ENCODE measurements at regions of chr20 and their contacts with region 1.

Region 1: DNA sequence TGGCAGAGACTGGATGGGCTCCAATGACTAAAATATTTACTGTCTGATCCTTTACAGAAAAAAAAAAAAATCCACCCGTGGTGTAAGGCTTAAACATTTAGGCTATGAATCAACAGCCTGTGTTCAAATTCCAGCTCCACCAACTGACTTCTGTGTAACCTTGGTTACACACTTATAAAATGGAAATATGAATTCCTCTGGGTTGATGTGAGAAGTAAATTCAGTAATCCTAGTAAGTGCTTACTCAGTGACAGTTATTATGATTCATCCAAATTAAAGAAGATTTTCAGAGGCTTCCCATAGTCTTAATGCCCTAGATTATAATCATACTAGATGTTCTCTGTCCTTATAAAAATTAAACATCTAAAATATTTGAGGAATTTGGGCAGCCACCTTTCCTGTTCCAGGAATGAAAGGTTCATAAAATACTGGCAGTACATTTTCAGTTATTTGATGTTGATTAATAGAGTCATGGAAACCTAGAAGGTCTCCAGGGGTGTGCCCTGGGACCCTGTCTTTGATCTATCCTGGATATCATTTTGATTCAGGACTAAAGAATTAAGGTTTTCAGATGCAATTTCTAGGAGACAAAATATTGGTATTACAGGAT is 180.3 kb upstream of the ZNF217 start:
- DNase-seq: peak; percentile 37 to 99
- H3K4me3 ChIP-seq: no peak overlapping the region
- H3K27ac ChIP-seq: peak overlapping the region; percentile 93
- H3K4me1 ChIP-seq: peaks cover 41% of the 10 kb centered on the region
- H3K27me3 ChIP-seq: no peaks in the 10 kb centered on the region
- CTCF ChIP-seq: no peak

Region 2: GRCh38 chr20:53539516-53539915 is 234.4 kb before region 1 on chr20:
- CTCF ChIA-PET with region 1: no interaction called
- POLR2A ChIA-PET with region 1: no interaction called
- intact Hi-C with region 1: no loop called
- DNase-seq: no peak
- H3K4me3 ChIP-seq: no peak overlapping the region
- H3K27ac ChIP-seq: no peak overlapping the region
- H3K4me1 ChIP-seq: no peaks in the 10 kb centered on the region
- H3K27me3 ChIP-seq: no peaks in the 10 kb centered on the region
- CTCF ChIP-seq: no peak

Region 3: GRCh38 chr20:53643031-53643832 is 130.7 kb before region 1 on chr20:
- CTCF ChIA-PET with region 1: interaction called, 11 read pairs
- POLR2A ChIA-PET with region 1: no interaction called
- intact Hi-C with region 1: no loop called
- DNase-seq: peak; percentile 73 to 98
- H3K4me3 ChIP-seq: peak overlapping the region; percentile 26
- H3K27ac ChIP-seq: peak overlapping the region; percentile 94
- H3K4me1 ChIP-seq: peaks cover 39% of the 10 kb centered on the region
- H3K27me3 ChIP-seq: no peaks in the 10 kb centered on the region
- CTCF ChIP-seq: no peak; the same call in 1 of the 2 replicates

Region 4: GRCh38 chr20:53786445-53787267 is 12.8 kb after region 1 on chr20:
- CTCF ChIA-PET with region 1: no interaction called
- POLR2A ChIA-PET with region 1: no interaction called
- intact Hi-C with region 1: loop called (anchors 1 kb)
- DNase-seq: peak; percentile 44 to 97
- H3K4me3 ChIP-seq: peak overlapping the region; percentile 40; the same call in 1 of the 2 replicates
- H3K27ac ChIP-seq: peak overlapping the region; percentile 98
- H3K4me1 ChIP-seq: peaks cover 68% of the 10 kb centered on the region
- H3K27me3 ChIP-seq: no peaks in the 10 kb centered on the region
- CTCF ChIP-seq: no peak; the same call in 1 of the 2 replicates